Mammary epithelial cell (primary cell): ENCODE measurements at regions of chr16 and their contacts with region 1.

Region 1: DNA sequence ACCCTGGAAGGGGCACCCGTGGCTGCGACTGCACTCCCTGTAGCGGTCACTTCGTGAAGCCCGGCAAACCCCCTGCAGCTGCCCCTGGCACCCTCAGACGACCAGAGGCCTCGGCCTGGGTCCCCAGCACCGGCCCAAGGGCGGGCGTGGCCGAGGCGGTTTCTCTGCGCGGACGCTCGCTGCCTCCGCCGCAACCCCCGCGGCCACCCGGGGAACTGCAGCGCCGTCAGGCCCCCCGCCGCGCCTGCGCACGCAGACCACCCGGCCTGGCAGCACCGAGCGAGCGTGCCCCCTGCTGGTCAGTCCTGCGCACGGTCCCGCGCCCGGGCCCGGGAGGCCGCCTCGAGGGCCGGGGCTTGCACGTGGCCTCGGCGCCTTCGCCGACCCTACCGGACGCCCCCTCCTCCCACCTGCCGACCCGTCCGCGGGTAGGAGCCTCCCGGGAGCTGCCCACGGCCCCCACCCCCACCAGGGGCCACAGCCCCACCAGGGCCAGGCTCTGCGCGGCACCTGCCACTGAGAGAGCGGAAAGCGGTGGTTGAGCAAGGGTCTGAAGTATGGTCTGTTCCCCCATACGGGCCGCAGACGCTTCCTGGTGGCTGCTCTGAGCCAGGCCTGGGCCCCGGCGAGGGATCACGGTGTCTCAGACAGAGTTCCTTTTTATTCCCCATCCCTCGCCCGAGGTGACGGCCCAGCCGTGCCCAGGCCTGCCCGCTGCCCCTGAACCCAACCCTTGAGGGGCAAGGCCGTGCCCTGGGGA is 11.5 kb upstream of the HS3ST6 start:
- DNase-seq: peak; percentile 71
- H3K4me3 ChIP-seq: peak overlapping the region; percentile 10 to 64 (median 45)
- H3K27ac ChIP-seq: no peak overlapping the region
- H3K4me1 ChIP-seq: peaks cover 6% of the 10 kb centered on the region
- H3K27me3 ChIP-seq: no peaks in the 10 kb centered on the region
- CTCF ChIP-seq: peak; percentile 64 to 79

Region 2: DNA sequence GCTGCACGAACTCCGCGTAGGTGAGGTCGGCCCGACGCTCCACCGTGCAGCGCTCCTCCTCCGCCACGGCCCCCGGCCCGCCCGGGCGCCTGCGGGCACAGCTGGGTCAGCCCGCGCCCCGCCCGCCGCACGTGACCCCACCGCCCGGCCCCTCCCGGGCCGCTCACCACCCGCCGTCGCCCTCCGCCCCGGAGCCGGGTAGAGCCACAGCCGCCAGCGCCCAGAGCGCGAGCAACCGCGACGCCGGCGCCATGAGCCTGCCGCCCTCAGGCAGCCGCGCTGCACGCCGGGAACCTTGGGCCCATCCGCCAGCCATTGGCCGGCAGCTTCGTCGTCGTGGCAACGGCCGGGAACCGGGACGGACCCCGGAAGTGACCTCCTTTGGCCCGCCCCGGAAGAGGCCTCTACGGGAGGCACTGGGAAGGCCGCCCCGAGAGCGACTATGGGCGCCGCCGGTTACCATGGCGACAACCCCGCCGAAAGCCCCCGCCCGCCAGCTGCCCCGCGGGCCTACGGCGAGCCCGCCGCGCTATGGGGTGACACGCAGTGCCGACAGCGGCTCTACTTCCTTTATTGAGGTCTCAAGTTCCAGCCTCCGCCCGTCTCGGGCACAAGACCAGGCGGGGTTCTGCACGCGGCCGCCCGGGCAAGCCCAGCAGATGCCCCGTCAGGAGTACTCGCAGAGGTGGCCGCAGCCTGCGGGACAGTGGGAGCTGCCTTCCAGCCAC is 1245.5 kb before region 1 on chr16 and contains the start of gene JMJD8:
- CTCF ChIA-PET with region 1: interaction called, 11 read pairs
- dilution Hi-C with region 1: no loop called
- in situ Hi-C with region 1: no loop called
- intact Hi-C with region 1: no loop called
- DNase-seq: peak; percentile 96
- H3K4me3 ChIP-seq: peak within 1 kb of the TSS; percentile 55 to 86 (median 68)
- H3K27ac ChIP-seq: peak within 1 kb of the TSS; percentile 52
- H3K4me1 ChIP-seq: peaks cover 53% of the 10 kb centered on the region
- H3K27me3 ChIP-seq: no peaks in the 10 kb centered on the region
- CTCF ChIP-seq: no peak
- total RNA-seq, gene JMJD8: 21.2 to 32.4 TPM

Region 3: DNA sequence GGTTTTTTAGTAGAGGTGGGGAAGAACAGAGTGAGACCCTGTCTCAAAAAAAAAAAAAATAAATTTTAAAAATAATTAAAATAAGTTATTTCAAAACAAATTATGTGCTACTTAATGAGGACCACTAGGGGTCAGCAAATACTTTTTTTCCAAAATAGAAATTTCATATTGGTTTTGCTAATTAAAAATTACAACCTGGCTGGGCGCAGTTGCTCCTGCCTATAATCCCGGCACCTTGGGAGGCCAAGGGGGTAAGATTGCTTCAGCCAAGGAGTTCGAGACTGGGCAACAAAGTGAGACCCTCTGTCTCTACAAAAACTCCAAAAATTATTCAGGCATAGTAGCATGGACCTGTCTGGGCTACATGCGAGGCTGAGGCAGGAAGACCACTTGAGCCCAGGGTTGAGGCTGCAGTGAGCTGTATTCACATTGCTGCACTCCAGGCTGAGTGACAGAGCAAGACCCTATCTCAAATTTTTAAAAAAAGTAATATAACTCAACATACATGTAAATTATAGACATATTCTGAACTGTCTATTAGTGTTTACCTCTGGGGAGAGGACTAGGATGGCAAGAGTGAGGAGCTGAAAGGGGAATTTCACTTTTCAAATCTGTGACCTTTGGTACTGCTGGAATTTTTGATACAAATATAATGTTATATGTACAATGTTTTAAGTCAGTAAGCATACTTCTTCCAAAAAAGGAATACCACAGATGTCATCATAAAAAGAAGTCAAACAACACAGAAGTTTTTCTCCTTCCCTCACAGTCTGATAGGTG is 65.9 kb before region 1 on chr16:
- CTCF ChIA-PET with region 1: no interaction called
- dilution Hi-C with region 1: loop called (anchors 5 kb)
- in situ Hi-C with region 1: loop called (anchors 5 to 10 kb)
- intact Hi-C with region 1: loop called (anchors 1 kb)
- DNase-seq: no peak
- H3K4me3 ChIP-seq: no peak overlapping the region
- H3K27ac ChIP-seq: no peak overlapping the region
- H3K4me1 ChIP-seq: peaks cover 3% of the 10 kb centered on the region
- H3K27me3 ChIP-seq: no peaks in the 10 kb centered on the region
- CTCF ChIP-seq: peak; percentile 50

Region 4: DNA sequence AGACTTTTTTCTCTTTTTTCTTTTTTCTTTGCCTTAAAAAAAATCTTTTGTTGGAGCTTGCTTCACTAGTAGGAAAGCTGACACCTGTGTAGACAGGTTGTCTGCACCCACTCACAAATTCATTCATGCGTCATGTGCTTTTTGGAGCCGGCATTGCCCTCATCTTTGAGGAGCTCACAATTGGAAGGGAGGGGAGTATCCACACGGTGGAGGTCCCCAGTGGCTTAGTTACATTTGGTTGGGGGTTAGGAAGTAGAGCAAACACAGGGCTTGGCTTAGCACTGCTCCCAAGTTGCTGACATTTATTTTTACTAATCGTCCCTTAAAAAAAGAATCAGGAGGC is 39.1 kb before region 1 on chr16:
- CTCF ChIA-PET with region 1: no interaction called
- dilution Hi-C with region 1: loop called (anchors 5 kb)
- in situ Hi-C with region 1: no loop called
- intact Hi-C with region 1: no loop called
- DNase-seq: no peak
- H3K4me3 ChIP-seq: no peak overlapping the region
- H3K27ac ChIP-seq: no peak overlapping the region
- H3K4me1 ChIP-seq: no peaks in the 10 kb centered on the region
- H3K27me3 ChIP-seq: no peaks in the 10 kb centered on the region
- CTCF ChIP-seq: no peak

Region 5: GRCh38 chr16:1964506-1965395 is 35.0 kb after region 1 on chr16 and contains the start of gene RPS2:
- CTCF ChIA-PET with region 1: no interaction called
- dilution Hi-C with region 1: loop called (anchors 5 kb)
- in situ Hi-C with region 1: no loop called
- intact Hi-C with region 1: no loop called
- DNase-seq: peak; percentile 96
- H3K4me3 ChIP-seq: peak within 1 kb of the TSS; percentile 59 to 98 (median 94)
- H3K27ac ChIP-seq: peak within 1 kb of the TSS; percentile 87
- H3K4me1 ChIP-seq: peaks cover 16% of the 10 kb centered on the region
- H3K27me3 ChIP-seq: no peaks in the 10 kb centered on the region
- CTCF ChIP-seq: no peak
- total RNA-seq, gene RPS2: 1,442 to 3,060 TPM